GM12878 (cell line): ENCODE measurements at regions of chr3 and their contacts with region 1.

Region 1: GRCh38 chr3:51422211-51422610 is 31.1 kb downstream of the RBM15B start:
- DNase-seq: no peak
- ATAC-seq: no peak
- H3K4me3 ChIP-seq: no peak overlapping the region
- H3K27ac ChIP-seq: no peak overlapping the region
- H3K4me1 ChIP-seq: no peaks in the 10 kb centered on the region
- H3K27me3 ChIP-seq: no peaks in the 10 kb centered on the region
- CTCF ChIP-seq: no peak
- EP300 ChIP-seq: no peak
- POLR2A ChIP-seq: no peak
- RAD21 ChIP-seq: no peak

Region 2: GRCh38 chr3:51434746-51435327 is 12.6 kb after region 1 on chr3:
- CTCF ChIA-PET with region 1: interaction called, 15 read pairs
- POLR2A ChIA-PET with region 1: interaction called, 5 read pairs
- RAD21 ChIA-PET with region 1: no interaction called
- SMC1A ChIA-PET with region 1: no interaction called
- in situ Hi-C with region 1: no loop called
- intact Hi-C with region 1: no loop called
- DNase-seq: peak; percentile 5
- ATAC-seq: peak; percentile 94
- H3K4me3 ChIP-seq: no peak overlapping the region
- H3K27ac ChIP-seq: no peak overlapping the region
- H3K4me1 ChIP-seq: no peaks in the 10 kb centered on the region
- H3K27me3 ChIP-seq: no peaks in the 10 kb centered on the region
- CTCF ChIP-seq: peak; percentile 60 to 84 (median 68)
- EP300 ChIP-seq: no peak
- POLR2A ChIP-seq: no peak
- RAD21 ChIP-seq: peak; percentile 39

Region 3: GRCh38 chr3:52552089-52552488 is 1129.9 kb after region 1 on chr3:
- CTCF ChIA-PET with region 1: no interaction called
- POLR2A ChIA-PET with region 1: no interaction called
- RAD21 ChIA-PET with region 1: no interaction called
- SMC1A ChIA-PET with region 1: no interaction called
- in situ Hi-C with region 1: no loop called
- intact Hi-C with region 1: no loop called
- DNase-seq: no peak
- ATAC-seq: no peak
- H3K4me3 ChIP-seq: no peak overlapping the region
- H3K27ac ChIP-seq: no peak overlapping the region
- H3K4me1 ChIP-seq: no peaks in the 10 kb centered on the region
- H3K27me3 ChIP-seq: no peaks in the 10 kb centered on the region
- CTCF ChIP-seq: no peak
- EP300 ChIP-seq: no peak
- POLR2A ChIP-seq: no peak
- RAD21 ChIP-seq: no peak